Tibial artery (tissue), 4 donors: ENCODE measurements at regions of chr10 and their contacts with region 1.

Region 1: GRCh38 chr10:37552881-37553280 is 304.5 kb downstream of the ZNF248 start:
- DNase-seq: no peak
- H3K4me3 ChIP-seq: no peak overlapping the region
- H3K27ac ChIP-seq: no peak overlapping the region
- H3K4me1 ChIP-seq: no peaks in the 10 kb centered on the region
- H3K27me3 ChIP-seq: no peaks in the 10 kb centered on the region
- CTCF ChIP-seq: no peak

Region 2: DNA sequence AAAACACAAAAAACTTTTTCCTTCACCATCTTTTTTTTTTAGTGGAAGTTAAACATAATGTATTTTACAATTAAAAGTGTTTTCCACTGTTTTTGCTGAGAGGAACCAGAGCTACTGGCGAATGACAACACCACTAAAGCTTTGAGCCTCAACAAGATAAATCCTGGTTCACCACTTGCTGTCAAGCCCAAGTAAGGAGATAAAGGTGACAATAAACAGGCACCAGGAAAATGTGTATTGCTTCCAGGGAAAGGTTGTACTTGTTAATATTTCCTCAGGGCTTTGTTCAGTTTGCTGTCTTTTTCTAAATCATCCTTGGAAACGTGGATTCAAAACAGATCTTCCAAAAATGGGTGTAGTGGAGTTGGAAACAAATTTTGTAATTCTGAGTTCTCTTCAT is 537.4 kb before region 1 on chr10:
- intact Hi-C with region 1: loop called (anchors 5 kb)
- DNase-seq: no peak
- H3K4me3 ChIP-seq: no peak overlapping the region
- H3K27ac ChIP-seq: no peak overlapping the region
- H3K4me1 ChIP-seq: no peaks in the 10 kb centered on the region
- H3K27me3 ChIP-seq: no peaks in the 10 kb centered on the region
- CTCF ChIP-seq: no peak

Region 3: DNA sequence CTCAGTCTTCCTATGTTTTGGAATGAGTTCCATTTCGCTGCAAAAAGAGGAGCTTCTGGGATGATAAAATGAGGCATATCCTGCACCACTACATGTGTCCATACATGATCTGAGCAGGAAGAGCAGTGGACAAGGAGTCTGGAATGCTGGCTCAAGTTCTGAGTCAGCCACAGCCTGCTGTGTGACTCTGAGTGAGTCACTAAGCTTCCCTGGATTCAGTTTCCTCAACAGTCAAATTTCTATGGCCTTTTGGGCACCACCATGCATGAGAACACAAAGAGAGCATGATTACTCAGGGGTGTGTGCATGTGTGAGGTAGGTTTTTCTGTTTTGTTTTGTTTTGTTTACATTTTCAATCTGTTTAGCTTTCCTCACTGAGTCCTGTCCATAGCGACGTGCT is 172.9 kb before region 1 on chr10:
- intact Hi-C with region 1: no loop called
- DNase-seq: no peak
- H3K4me3 ChIP-seq: no peak overlapping the region
- H3K27ac ChIP-seq: no peak overlapping the region
- H3K4me1 ChIP-seq: no peaks in the 10 kb centered on the region
- H3K27me3 ChIP-seq: no peaks in the 10 kb centered on the region
- CTCF ChIP-seq: no peak